GM12878 (cell line): ENCODE measurements at regions of chr6 and their contacts with region 1.

Region 1: GRCh38 chr6:20212392-20213217 is at the start of gene MBOAT1:
- DNase-seq: no peak
- ATAC-seq: peak; percentile 89
- H3K4me3 ChIP-seq: peak within 1 kb of the TSS; percentile 82
- H3K27ac ChIP-seq: peak within 1 kb of the TSS; percentile 77
- H3K4me1 ChIP-seq: peaks cover 10% of the 10 kb centered on the region
- H3K27me3 ChIP-seq: no peaks in the 10 kb centered on the region
- CTCF ChIP-seq: peak in 2 of 3 experiments; percentile 7 to 16; a peak in 1 of 6 replicates
- EP300 ChIP-seq: no peak
- POLR2A ChIP-seq: peak; percentile 86
- RAD21 ChIP-seq: no peak
- polyA plus RNA-seq, gene MBOAT1: 0.39 to 0.44 TPM

Region 2: DNA sequence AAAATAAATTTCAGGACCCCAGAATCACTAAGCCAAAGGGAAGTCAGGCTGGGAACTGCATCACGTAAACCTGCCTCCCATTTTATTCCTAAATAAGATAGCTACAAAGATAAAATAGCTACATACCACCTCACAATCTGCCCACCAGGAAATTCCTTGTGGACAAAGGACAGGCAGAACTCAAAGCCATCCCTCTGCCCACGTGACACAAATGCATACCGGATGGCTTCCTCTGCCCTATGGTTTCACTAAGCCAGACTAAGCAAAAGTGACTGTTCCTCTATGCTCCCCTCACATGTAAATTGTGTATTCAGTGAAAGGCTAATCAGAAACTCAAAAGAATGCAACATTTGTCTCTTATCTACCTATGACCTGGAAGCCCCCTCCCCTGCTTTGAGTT is 15.4 kb before region 1 on chr6:
- CTCF ChIA-PET with region 1: interaction called, 15 read pairs
- POLR2A ChIA-PET with region 1: interaction called, 34 read pairs
- RAD21 ChIA-PET with region 1: interaction called, 24 read pairs
- SMC1A ChIA-PET with region 1: interaction called, 64 read pairs
- in situ Hi-C with region 1: no loop called
- intact Hi-C with region 1: no loop called
- DNase-seq: no peak
- ATAC-seq: peak; percentile 41
- H3K4me3 ChIP-seq: no peak overlapping the region
- H3K27ac ChIP-seq: peak overlapping the region; percentile 38
- H3K4me1 ChIP-seq: peaks cover 38% of the 10 kb centered on the region
- H3K27me3 ChIP-seq: no peaks in the 10 kb centered on the region
- CTCF ChIP-seq: no peak
- EP300 ChIP-seq: no peak
- POLR2A ChIP-seq: no peak
- RAD21 ChIP-seq: no peak

Region 3: GRCh38 chr6:20202324-20202658 is 10.3 kb before region 1 on chr6:
- CTCF ChIA-PET with region 1: interaction called, 15 read pairs
- POLR2A ChIA-PET with region 1: interaction called, 34 read pairs
- RAD21 ChIA-PET with region 1: interaction called, 24 read pairs
- SMC1A ChIA-PET with region 1: interaction called, 64 read pairs
- in situ Hi-C with region 1: no loop called
- intact Hi-C with region 1: no loop called
- DNase-seq: no peak
- ATAC-seq: peak; percentile 34
- H3K4me3 ChIP-seq: 0 out of 2 replicates have a peak overlapping the region, but pooled peaks have one; percentile 24
- H3K27ac ChIP-seq: peak overlapping the region; percentile 77
- H3K4me1 ChIP-seq: peaks cover 72% of the 10 kb centered on the region
- H3K27me3 ChIP-seq: no peaks in the 10 kb centered on the region
- CTCF ChIP-seq: no peak
- EP300 ChIP-seq: no peak
- POLR2A ChIP-seq: no peak
- RAD21 ChIP-seq: no peak

Region 4: GRCh38 chr6:20266851-20267608 is 54.4 kb after region 1 on chr6:
- CTCF ChIA-PET with region 1: no interaction called
- POLR2A ChIA-PET with region 1: no interaction called
- RAD21 ChIA-PET with region 1: interaction called, 12 read pairs
- SMC1A ChIA-PET with region 1: interaction called, 3 read pairs
- in situ Hi-C with region 1: no loop called
- intact Hi-C with region 1: loop called (anchors 5 kb)
- DNase-seq: peak; percentile 12
- ATAC-seq: peak; percentile 94
- H3K4me3 ChIP-seq: no peak overlapping the region
- H3K27ac ChIP-seq: peak overlapping the region; percentile 35
- H3K4me1 ChIP-seq: peaks cover 7% of the 10 kb centered on the region
- H3K27me3 ChIP-seq: no peaks in the 10 kb centered on the region; a peak in 1 of 4 replicates
- CTCF ChIP-seq: no peak
- EP300 ChIP-seq: no peak
- POLR2A ChIP-seq: no peak
- RAD21 ChIP-seq: no peak

Region 5: DNA sequence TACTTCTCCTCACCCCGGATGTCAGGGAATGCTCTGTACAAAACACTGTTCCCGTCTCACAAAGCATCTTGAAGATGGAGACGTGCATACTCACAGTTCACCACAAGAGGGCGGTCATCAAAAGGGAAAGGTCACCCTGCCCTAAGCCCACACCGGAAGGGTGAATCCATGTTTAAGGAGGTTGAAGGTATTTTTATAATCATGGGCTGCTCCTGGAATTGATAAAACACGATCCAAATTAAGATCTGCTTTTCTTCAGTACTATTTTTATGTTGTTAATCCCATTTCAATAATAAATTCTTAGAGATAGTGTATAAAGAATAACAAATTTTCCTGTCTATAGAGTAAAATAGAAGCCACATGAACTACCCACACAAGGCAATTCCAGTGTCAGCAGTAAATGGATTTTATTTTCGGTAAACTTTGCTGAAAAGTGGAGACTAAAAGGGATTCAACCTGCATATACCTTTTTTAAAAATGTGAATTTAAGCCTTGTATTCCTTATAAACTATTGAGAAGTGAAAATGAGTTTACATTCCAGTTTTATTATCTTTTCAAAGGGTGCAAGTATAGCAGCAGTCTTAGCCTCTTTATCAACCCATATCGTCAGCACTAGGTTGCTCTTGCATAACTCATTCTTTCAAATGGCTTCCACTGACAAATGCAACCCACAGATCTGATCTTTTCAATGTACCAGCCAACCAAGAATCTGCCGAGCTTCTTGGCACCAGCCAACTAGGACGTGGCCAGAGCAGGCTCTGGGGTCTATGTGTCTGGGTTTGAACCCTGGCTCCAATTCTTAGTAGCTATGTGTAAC is 79.4 kb after region 1 on chr6:
- CTCF ChIA-PET with region 1: interaction called, 4 read pairs
- POLR2A ChIA-PET with region 1: interaction called, 4 read pairs
- RAD21 ChIA-PET with region 1: interaction called, 6 read pairs
- SMC1A ChIA-PET with region 1: interaction called, 3 read pairs
- in situ Hi-C with region 1: no loop called
- intact Hi-C with region 1: loop called (anchors 5 kb)
- DNase-seq: peak; percentile 52
- ATAC-seq: peak; percentile 92
- H3K4me3 ChIP-seq: no peak overlapping the region
- H3K27ac ChIP-seq: no peak overlapping the region
- H3K4me1 ChIP-seq: no peaks in the 10 kb centered on the region
- H3K27me3 ChIP-seq: no peaks in the 10 kb centered on the region
- CTCF ChIP-seq: peak; percentile 88 to 93 (median 90)
- EP300 ChIP-seq: no peak
- POLR2A ChIP-seq: no peak
- RAD21 ChIP-seq: peak; percentile 99

Region 6: GRCh38 chr6:20534295-20535262 is 322.0 kb after region 1 on chr6 and contains the start of gene CDKAL1:
- CTCF ChIA-PET with region 1: interaction called, 3 read pairs
- POLR2A ChIA-PET with region 1: no interaction called
- RAD21 ChIA-PET with region 1: no interaction called
- SMC1A ChIA-PET with region 1: no interaction called
- in situ Hi-C with region 1: no loop called
- intact Hi-C with region 1: loop called (anchors 5 kb)
- DNase-seq: peak; percentile 91
- ATAC-seq: peak; percentile 89
- H3K4me3 ChIP-seq: peak within 1 kb of the TSS; percentile 93
- H3K27ac ChIP-seq: peak within 1 kb of the TSS; percentile 89
- H3K4me1 ChIP-seq: peaks cover 6% of the 10 kb centered on the region; the same call in 1 of the 2 replicates
- H3K27me3 ChIP-seq: no peaks in the 10 kb centered on the region
- CTCF ChIP-seq: no peak
- EP300 ChIP-seq: no peak
- POLR2A ChIP-seq: peak; percentile 87
- RAD21 ChIP-seq: no peak
- polyA plus RNA-seq, gene CDKAL1: 10.7 to 10.9 TPM